Stomach (tissue), 19 donors: ENCODE measurements at regions of chr20 and their contacts with region 1.

Region 1: GRCh38 chr20:37527638-37528441 is at the start of gene BLCAP:
- DNase-seq: peak; percentile 91 to 96
- H3K4me3 ChIP-seq: peak within 1 kb of the TSS; percentile 88 to 99 (median 96)
- H3K27ac ChIP-seq: peak within 1 kb of the TSS; percentile 94 to 97 (median 96)
- H3K4me1 ChIP-seq: peaks cover 28 to 49% (median 46%) of the 10 kb centered on the region in 4 donors
- H3K27me3 ChIP-seq: no peaks in the 10 kb centered on the region
- CTCF ChIP-seq: no peak
- EP300 ChIP-seq: no peak
- POLR2A ChIP-seq: peak in 2 of 4 donors; percentile 25 to 45
- total RNA-seq, gene BLCAP: 12.5 to 84.4 (median 56.5) TPM

Region 2: DNA sequence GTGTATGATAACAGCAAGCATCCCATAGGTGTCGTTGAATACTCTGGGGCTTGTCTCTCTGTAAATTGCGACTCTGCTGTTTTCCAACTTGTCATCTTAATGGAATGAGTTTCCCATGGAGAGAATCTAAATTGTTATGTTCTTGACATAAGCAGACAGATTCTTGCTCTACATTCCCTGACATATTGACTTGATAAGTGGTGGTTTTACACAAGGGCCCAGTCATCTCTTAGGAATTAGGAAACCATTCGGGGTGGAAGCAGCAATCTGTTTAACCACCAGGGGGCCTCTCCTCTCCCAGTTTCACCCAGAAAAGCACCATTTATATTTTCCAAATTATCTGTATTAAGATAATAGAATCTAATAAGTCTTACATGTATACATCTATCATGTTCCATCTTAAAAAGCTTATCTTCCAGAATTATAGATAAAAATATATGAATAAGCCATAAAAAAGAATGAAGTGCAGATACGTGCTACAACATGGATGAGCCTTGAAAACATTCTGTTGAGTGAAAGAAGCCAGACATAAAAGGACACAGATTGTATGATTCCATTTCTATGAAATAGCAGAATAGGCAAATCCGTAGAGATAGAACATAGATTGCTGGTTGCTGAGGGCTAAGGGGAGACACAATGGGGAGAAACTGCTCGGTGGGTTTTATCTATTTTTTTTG is 325.4 kb before region 1 on chr20:
- intact Hi-C with region 1: loop called (anchors 5 kb)
- DNase-seq: peak in 1 of 2 donors; percentile 72
- H3K4me3 ChIP-seq: no peak overlapping the region
- H3K27ac ChIP-seq: peak overlapping the region in 4 of 5 donors; percentile 49 to 68 (median 57)
- H3K4me1 ChIP-seq: peaks cover 0 to 16% (median 8%) of the 10 kb centered on the region in 4 donors
- H3K27me3 ChIP-seq: no peaks in the 10 kb centered on the region
- CTCF ChIP-seq: peak in 5 of 7 experiments; percentile 46 to 81 (median 74)
- EP300 ChIP-seq: no peak
- POLR2A ChIP-seq: no peak

Region 3: GRCh38 chr20:37406010-37406998 is 121.5 kb before region 1 on chr20:
- intact Hi-C with region 1: loop called (anchors 10 kb)
- DNase-seq: peak; percentile 45 to 80
- H3K4me3 ChIP-seq: peak overlapping the region; percentile 32 to 47 (median 37)
- H3K27ac ChIP-seq: peak overlapping the region in 1 of 5 donors; percentile 35
- H3K4me1 ChIP-seq: peaks cover 9 to 38% (median 28%) of the 10 kb centered on the region in 4 donors
- H3K27me3 ChIP-seq: peaks cover 0 to 47% (median 25%) of the 10 kb centered on the region in 3 donors
- CTCF ChIP-seq: no peak
- EP300 ChIP-seq: no peak
- POLR2A ChIP-seq: no peak

Region 4: DNA sequence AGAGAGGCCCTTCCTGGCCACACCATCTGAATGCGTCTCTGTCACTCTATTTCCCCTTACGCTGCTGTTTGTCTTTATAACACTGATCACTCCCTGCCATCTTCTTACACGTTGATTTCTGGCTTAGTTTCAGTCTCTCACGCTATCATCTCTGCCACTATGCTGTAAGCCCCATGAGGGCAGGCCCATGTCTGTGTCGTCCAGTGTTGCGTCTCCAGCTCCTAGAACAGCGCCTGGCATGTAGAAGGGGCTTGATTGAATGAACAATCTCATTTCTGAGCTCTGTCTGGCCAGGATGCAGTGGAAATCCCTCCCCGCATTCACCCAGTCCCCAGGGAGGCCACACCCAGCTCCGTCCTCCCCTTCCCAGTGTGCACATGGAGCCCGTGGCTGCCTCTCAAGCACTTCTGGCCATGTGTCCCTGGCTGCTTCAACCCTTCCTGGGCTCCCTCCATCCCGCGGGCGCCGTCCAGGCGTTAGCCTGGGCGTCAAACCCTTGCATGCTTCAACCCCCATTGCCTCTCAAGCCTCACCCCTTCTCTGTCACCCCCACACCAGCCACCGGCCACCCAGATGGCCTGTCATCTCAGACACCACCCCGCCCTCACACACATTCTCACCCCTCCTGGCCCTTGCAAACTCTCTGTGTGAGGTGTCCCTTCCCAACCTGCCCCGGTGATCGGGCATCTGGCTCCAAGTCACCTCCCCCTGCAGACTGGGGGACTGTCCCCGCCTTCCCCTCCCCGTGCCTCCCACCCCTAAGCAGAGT is 110.8 kb before region 1 on chr20:
- intact Hi-C with region 1: no loop called
- DNase-seq: no peak
- H3K4me3 ChIP-seq: no peak overlapping the region
- H3K27ac ChIP-seq: no peak overlapping the region
- H3K4me1 ChIP-seq: peaks cover 4 to 10% (median 7%) of the 10 kb centered on the region in 4 donors
- H3K27me3 ChIP-seq: peaks cover 0 to 79% (median 33%) of the 10 kb centered on the region in 3 donors
- CTCF ChIP-seq: no peak
- EP300 ChIP-seq: no peak
- POLR2A ChIP-seq: no peak